ENCODE measurements at regions of chr18 and their contacts with region 1.

Region 1: DNA sequence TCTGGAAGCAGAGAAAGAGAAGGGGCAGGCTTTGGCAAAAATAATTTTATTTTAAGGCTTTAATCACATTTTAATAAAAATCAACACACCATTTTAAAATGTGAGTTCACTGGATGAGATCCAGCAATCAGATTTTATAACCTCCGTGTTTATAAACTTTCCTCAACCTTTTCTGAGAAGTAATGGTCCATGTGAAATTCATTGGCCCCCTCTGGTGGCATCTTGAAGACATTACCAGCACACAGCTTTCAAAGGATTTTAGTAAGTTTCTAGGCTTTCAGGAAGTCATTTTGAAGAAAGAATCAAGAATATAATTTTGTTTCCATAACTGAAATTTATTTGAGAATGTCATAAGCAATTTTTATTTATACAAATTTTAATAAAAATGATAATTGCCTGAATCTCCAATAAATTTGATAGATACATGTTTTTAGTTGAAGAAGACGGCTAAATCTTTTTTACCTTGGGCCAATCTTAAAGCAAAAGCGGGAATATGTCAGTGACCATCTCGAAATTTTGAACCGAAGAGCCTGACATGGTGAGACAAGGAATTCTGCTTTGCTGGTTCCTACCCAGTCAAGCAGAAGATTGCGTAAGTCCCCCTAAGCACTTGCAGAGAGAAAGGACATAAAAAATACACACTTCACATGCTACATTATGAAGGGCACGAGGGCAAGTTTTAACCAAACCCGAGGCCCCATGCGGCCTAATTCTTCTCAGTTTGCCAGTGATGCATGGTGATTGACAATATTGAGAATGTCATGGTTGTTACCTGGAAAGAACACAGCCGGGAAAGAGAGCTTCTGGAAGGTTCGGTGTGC is 128.4 kb upstream of the CBLN2 start:
- DNase-seq: no peak
- H3K4me3 Mint-ChIP-seq: no peak overlapping the region
- H3K27ac Mint-ChIP-seq: no peak overlapping the region
- H3K4me1 Mint-ChIP-seq: no peaks in the 10 kb centered on the region
- H3K27me3 Mint-ChIP-seq: peaks cover 1% of the 10 kb centered on the region

Region 2: GRCh38 chr18:72652990-72653593 is 19.5 kb before region 1 on chr18:
- CTCF ChIA-PET with region 1: interaction called, 4 read pairs
- POLR2A ChIA-PET with region 1: no interaction called
- intact Hi-C with region 1: loop called (anchors 2 kb)
- DNase-seq: peak; percentile 55
- H3K4me3 Mint-ChIP-seq: no peak overlapping the region
- H3K27ac Mint-ChIP-seq: no peak overlapping the region
- H3K4me1 Mint-ChIP-seq: no peaks in the 10 kb centered on the region
- H3K27me3 Mint-ChIP-seq: no peaks in the 10 kb centered on the region

Measured in activated CD4-positive, alpha-beta memory T cell treated with anti-CD3 and anti-CD28 coated beads for 36 hours (primary cell).